ENCODE measurements at regions of chr6 and their contacts with region 1.

Region 1: GRCh38 chr6:27753668-27754407 is 158.4 kb downstream of the OR2B2 start:
- DNase-seq: peak; percentile 84 to 98 (median 89)
- ATAC-seq: peak; percentile 93
- H3K4me3 ChIP-seq: peak overlapping the region; percentile 67
- H3K27ac ChIP-seq: peak overlapping the region; percentile 44; the same call in 2 of the 3 replicates
- H3K4me1 ChIP-seq: peaks cover 14 to 16% of the 10 kb centered on the region in 2 experiments; a peak in 4 of 5 replicates
- H3K27me3 ChIP-seq: no peaks in the 10 kb centered on the region
- CTCF ChIP-seq: peak; percentile 49 to 61 (median 55)
- EP300 ChIP-seq: peak; percentile 13
- POLR2A ChIP-seq: peak; percentile 67
- RAD21 ChIP-seq: peak in 1 of 2 experiments; percentile 30; a peak in 1 of 4 replicates

Region 2: GRCh38 chr6:27157459-27158315 is 596.2 kb before region 1 on chr6:
- CTCF ChIA-PET with region 1: interaction called, 5 read pairs
- POLR2A ChIA-PET with region 1: no interaction called
- in situ Hi-C with region 1: no loop called
- intact Hi-C with region 1: loop called (anchors 2 kb)
- DNase-seq: peak; percentile 63 to 93 (median 70)
- ATAC-seq: peak; percentile 87
- H3K4me3 ChIP-seq: peak overlapping the region; percentile 54
- H3K27ac ChIP-seq: peak overlapping the region; percentile 46
- H3K4me1 ChIP-seq: peaks cover 10% of the 10 kb centered on the region in 2 experiments; a peak in 3 of 5 replicates
- H3K27me3 ChIP-seq: no peaks in the 10 kb centered on the region
- CTCF ChIP-seq: peak; percentile 73 to 77 (median 75)
- EP300 ChIP-seq: peak; percentile 49
- POLR2A ChIP-seq: 0 out of 2 replicates have a peak, but pooled peaks have one; percentile 12
- RAD21 ChIP-seq: peak; percentile 71 to 76

Region 3: GRCh38 chr6:27237089-27237803 is 516.6 kb before region 1 on chr6:
- CTCF ChIA-PET with region 1: no interaction called
- POLR2A ChIA-PET with region 1: no interaction called
- in situ Hi-C with region 1: no loop called
- intact Hi-C with region 1: loop called (anchors 2 kb)
- DNase-seq: peak; percentile 72 to 91 (median 74)
- ATAC-seq: peak; percentile 79
- H3K4me3 ChIP-seq: peak overlapping the region; percentile 20; the same call in 1 of the 2 replicates
- H3K27ac ChIP-seq: peak overlapping the region; percentile 49; the same call in 2 of the 3 replicates
- H3K4me1 ChIP-seq: peaks cover 0 to 8% of the 10 kb centered on the region in 2 experiments; a peak in 1 of 5 replicates
- H3K27me3 ChIP-seq: no peaks in the 10 kb centered on the region
- CTCF ChIP-seq: no peak
- EP300 ChIP-seq: 0 out of 2 replicates have a peak, but pooled peaks have one; percentile 30
- POLR2A ChIP-seq: no peak
- RAD21 ChIP-seq: no peak

Region 4: DNA sequence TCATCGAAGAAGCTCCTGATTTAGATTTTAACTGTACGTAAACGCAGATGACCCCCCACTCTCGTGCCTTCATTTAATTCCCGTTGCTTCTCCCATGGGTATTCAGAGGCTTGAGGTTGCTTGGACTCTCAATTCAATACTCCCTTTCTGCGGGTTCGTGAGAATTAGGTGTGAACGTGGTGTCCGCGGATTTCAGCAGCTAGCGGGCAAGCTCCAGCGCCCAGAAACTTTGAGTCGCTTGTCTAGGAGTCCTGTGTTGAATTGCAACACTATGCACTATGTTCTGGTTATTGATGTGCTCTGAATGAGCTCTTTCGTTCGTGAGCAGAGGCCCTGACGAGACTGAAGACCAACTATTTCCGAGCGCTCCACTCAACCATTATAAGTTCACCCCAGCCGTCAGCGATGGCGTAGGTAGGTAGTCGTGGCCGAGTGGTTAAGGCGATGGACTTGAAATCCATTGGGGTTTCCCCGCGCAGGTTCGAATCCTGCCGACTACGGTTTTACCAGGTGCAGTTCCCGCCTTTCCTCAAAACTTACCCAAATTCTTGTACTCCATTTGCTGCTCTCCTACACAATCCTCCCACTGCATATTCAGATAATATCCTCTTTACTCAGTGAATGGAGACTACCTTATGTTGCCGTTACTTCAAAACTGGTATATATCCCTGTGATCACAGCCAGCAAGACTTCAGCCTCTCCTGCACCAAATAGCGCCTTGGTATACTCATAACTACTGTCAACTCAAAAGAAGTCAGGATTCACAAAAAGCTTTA is 208.4 kb before region 1 on chr6:
- CTCF ChIA-PET with region 1: no interaction called
- POLR2A ChIA-PET with region 1: interaction called, 4 read pairs
- in situ Hi-C with region 1: no loop called
- intact Hi-C with region 1: loop called (anchors 2 kb)
- DNase-seq: peak; percentile 52 to 97 (median 68)
- ATAC-seq: peak; percentile 62
- H3K4me3 ChIP-seq: peak overlapping the region; percentile 50
- H3K27ac ChIP-seq: peak overlapping the region; percentile 77
- H3K4me1 ChIP-seq: peaks cover 4 to 25% of the 10 kb centered on the region in 2 experiments; a peak in 4 of 5 replicates
- H3K27me3 ChIP-seq: no peaks in the 10 kb centered on the region
- CTCF ChIP-seq: no peak
- EP300 ChIP-seq: peak; percentile 70
- POLR2A ChIP-seq: no peak
- RAD21 ChIP-seq: peak in 1 of 2 experiments; percentile 33; a peak in 1 of 4 replicates

Region 5: GRCh38 chr6:27617700-27618689 is 135.8 kb before region 1 on chr6:
- CTCF ChIA-PET with region 1: interaction called, 5 read pairs
- POLR2A ChIA-PET with region 1: interaction called, 4 read pairs
- in situ Hi-C with region 1: no loop called
- intact Hi-C with region 1: loop called (anchors 2 kb)
- DNase-seq: peak; percentile 62 to 81 (median 73)
- ATAC-seq: peak; percentile 90
- H3K4me3 ChIP-seq: peak overlapping the region; percentile 53
- H3K27ac ChIP-seq: peak overlapping the region; percentile 33
- H3K4me1 ChIP-seq: peaks cover 5 to 20% of the 10 kb centered on the region in 2 experiments; a peak in 4 of 5 replicates
- H3K27me3 ChIP-seq: no peaks in the 10 kb centered on the region
- CTCF ChIP-seq: peak; percentile 15 to 53 (median 39); a peak in 3 of 6 replicates
- EP300 ChIP-seq: peak; percentile 68
- POLR2A ChIP-seq: no peak
- RAD21 ChIP-seq: peak; percentile 19 to 55

Region 6: DNA sequence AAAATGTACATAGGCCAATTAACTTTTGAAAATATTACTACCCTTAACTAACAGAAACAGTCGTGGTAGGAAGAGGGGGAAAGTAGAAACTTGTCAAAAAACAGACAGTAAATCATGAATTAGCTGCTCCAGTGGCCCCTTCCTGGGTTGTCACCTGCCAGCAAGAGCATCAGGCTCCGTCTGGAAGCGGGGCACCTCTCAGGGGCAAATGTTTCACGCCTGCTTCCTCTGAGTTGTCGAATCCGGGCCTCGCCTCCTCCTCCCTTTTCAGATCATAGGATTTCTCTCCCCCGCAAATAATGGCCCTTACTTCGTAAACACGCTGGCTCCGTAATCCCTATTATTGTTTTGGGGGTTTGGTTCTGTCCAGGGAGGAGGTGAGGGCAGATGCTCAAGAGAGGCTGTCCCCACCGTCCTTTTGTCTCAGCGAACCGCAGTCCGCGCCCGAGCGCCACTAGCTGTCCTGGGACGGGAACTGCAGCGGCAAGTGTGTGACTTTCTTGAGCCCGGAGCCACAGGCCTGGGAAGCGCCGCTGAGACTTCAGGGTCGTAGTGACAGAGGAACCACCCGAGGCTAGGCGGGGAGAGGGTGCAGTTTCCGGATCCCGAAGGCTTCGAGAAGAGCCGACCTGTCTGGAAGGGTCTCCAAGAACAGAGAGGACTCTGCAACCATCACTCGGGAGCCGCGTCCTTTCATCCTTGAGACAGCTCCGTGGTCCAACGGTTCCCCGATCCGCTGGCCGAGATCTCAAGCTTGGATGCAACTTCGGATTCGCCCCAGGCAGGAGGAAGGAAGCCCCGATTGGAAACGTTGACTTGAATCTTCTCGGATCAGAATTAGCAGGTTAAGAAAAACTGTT is 66.5 kb before region 1 on chr6:
- CTCF ChIA-PET with region 1: no interaction called
- POLR2A ChIA-PET with region 1: interaction called, 5 read pairs
- in situ Hi-C with region 1: no loop called
- intact Hi-C with region 1: loop called (anchors 1 kb)
- DNase-seq: peak; percentile 78 to 97 (median 82)
- ATAC-seq: peak; percentile 89
- H3K4me3 ChIP-seq: peak overlapping the region; percentile 63
- H3K27ac ChIP-seq: peak overlapping the region; percentile 78
- H3K4me1 ChIP-seq: peaks cover 5 to 24% of the 10 kb centered on the region in 2 experiments; a peak in 4 of 5 replicates
- H3K27me3 ChIP-seq: no peaks in the 10 kb centered on the region
- CTCF ChIP-seq: peak; percentile 92 to 96 (median 95)
- EP300 ChIP-seq: 0 out of 2 replicates have a peak, but pooled peaks have one; percentile 14
- POLR2A ChIP-seq: no peak
- RAD21 ChIP-seq: peak; percentile 71 to 87